ENCODE measurements at regions of chrX and their contacts with region 1.

Region 1: DNA sequence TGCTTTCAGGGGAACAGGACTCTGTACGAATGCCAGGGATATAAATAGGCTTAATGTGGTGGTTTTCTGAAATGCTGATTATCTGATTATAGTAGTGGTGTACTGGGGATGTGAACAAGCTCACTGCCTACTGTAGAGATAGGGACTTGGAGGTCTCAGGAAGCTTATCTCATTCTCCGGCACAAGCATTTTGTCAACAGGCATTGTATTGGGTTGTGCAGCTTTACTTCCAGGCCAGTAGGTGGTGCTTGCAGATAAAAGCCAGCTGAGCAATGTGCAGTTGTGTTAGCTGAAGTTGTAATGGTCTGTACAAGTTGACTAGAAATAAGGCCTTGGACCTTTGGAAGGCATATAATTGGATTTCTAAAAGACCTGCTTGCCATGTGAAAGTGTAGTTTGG is 49.5 kb upstream of the TMLHE start:
- DNase-seq: no peak
- H3K4me3 ChIP-seq: no peak overlapping the region
- H3K27ac ChIP-seq: no peak overlapping the region
- H3K4me1 ChIP-seq: no peaks in the 10 kb centered on the region
- H3K27me3 ChIP-seq: no peaks in the 10 kb centered on the region
- CTCF ChIP-seq: peak; percentile 21

Region 2: GRCh38 chrX:155694649-155695048 is 32.4 kb after region 1 on chrX:
- intact Hi-C with region 1: loop called (anchors 5 kb)
- DNase-seq: no peak
- H3K4me3 ChIP-seq: no peak overlapping the region
- H3K27ac ChIP-seq: no peak overlapping the region
- H3K4me1 ChIP-seq: no peaks in the 10 kb centered on the region
- H3K27me3 ChIP-seq: no peaks in the 10 kb centered on the region
- CTCF ChIP-seq: no peak

Measured in kidney (tissue), 22 donors.